CD8-positive, alpha-beta T cell (primary cell): ENCODE measurements at regions of chr11 and their contacts with region 1.

Region 1: DNA sequence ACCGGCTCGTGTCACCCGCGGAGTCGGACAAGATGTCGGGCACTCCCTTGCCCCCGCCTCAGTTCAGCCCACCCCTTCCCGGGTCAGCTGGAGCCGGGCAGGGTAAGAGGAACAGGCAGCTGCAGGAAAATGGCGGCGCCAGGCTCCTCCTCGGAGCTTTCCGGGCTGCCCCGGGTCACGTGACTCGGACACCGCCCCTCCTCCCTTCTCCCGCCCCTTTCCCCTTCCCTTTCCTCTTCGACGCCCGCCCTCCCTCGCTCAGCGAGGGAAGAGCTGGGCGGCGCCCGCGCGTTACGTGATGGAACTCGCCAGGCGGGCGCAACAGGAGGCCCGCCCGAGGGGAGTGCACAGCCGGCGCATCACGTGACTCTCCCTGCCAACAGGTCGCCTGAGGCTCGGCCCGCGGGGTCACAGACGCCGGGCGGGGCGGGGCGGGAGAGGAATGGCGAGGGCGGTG is at the start of gene PICALM:
- DNase-seq: peak; percentile 91 to 99 (median 96)
- ATAC-seq: peak; percentile 91
- H3K4me3 ChIP-seq: peak within 1 kb of the TSS; percentile 94
- H3K4me3 Mint-ChIP-seq: peak within 1 kb of the TSS; percentile 100
- H3K27ac ChIP-seq: peak within 1 kb of the TSS; percentile 67 to 93
- H3K27ac Mint-ChIP-seq: peak within 1 kb of the TSS; percentile 97
- H3K4me1 ChIP-seq: peaks cover 24% of the 10 kb centered on the region
- H3K4me1 Mint-ChIP-seq: peaks cover 34% of the 10 kb centered on the region
- H3K27me3 ChIP-seq: no peaks in the 10 kb centered on the region
- H3K27me3 Mint-ChIP-seq: no peaks in the 10 kb centered on the region
- CTCF ChIP-seq: no peak
- total RNA-seq, gene PICALM: 79.8 to 80.0 TPM

Region 2: DNA sequence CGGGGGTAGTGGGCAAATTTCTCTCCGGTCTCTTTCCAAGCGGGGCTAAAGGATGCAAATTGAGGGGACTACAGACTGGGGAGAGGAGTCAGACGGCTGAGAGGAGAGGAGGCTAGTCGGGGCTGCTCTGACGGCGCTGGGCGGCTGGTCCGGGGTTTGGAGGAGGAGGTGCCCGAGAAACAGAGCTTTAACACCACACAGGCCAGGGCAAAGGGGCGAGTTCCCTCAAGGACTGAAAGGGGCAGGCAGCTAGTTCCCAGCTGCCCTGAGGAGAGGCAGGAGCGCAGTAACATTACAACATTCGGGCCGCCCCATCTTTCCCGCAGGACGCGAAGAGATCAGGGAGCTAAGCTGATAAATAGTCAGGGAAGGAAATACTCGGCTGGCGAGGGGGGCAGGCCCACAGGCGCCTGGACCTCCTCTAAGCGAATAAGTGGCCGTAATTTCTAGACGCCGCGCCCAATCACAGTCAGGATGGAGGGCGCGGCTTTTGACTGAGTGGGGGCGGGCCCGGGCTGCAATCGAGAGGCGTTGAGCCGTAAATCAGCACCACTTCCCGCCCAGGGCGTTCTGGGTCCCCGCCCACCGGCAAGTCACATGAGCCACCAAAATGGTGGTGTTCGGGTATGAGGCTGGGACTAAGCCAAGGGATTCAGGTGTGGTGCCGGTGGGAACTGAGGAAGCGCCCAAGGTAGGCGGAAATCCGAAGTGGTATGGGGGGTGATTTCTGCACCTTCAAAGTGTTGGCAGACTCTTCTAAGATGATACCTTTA is 440.8 kb before region 1 on chr11 and contains the start of gene TMEM126B:
- CTCF ChIA-PET with region 1: interaction called, 3 read pairs
- POLR2A ChIA-PET with region 1: interaction called, 6 read pairs
- intact Hi-C with region 1: loop called (anchors 1 to 2 kb)
- DNase-seq: peak; percentile 89 to 97 (median 96)
- ATAC-seq: peak; percentile 97
- H3K4me3 ChIP-seq: peak within 1 kb of the TSS; percentile 80 to 91
- H3K4me3 Mint-ChIP-seq: peak within 1 kb of the TSS; percentile 91
- H3K27ac ChIP-seq: peak within 1 kb of the TSS; percentile 76 to 83
- H3K27ac Mint-ChIP-seq: peak within 1 kb of the TSS; percentile 96
- H3K4me1 ChIP-seq: peaks cover 14% of the 10 kb centered on the region
- H3K4me1 Mint-ChIP-seq: peaks cover 51% of the 10 kb centered on the region
- H3K27me3 ChIP-seq: peaks cover 0 to 1% of the 10 kb centered on the region in 2 experiments
- H3K27me3 Mint-ChIP-seq: no peaks in the 10 kb centered on the region
- CTCF ChIP-seq: no peak
- total RNA-seq, gene TMEM126B: 16.2 to 19.9 TPM

Region 3: GRCh38 chr11:85664615-85665481 is 404.1 kb before region 1 on chr11 and contains the start of gene CREBZF:
- CTCF ChIA-PET with region 1: no interaction called
- POLR2A ChIA-PET with region 1: interaction called, 7 read pairs
- intact Hi-C with region 1: loop called (anchors 1 to 5 kb)
- DNase-seq: peak; percentile 84 to 96 (median 94)
- ATAC-seq: peak; percentile 61
- H3K4me3 ChIP-seq: peak within 1 kb of the TSS; percentile 78 to 94
- H3K4me3 Mint-ChIP-seq: peak within 1 kb of the TSS; percentile 100
- H3K27ac ChIP-seq: peak within 1 kb of the TSS; percentile 96 to 97
- H3K27ac Mint-ChIP-seq: peak within 1 kb of the TSS; percentile 100
- H3K4me1 ChIP-seq: peaks cover 38% of the 10 kb centered on the region
- H3K4me1 Mint-ChIP-seq: peaks cover 43% of the 10 kb centered on the region
- H3K27me3 ChIP-seq: no peaks in the 10 kb centered on the region
- H3K27me3 Mint-ChIP-seq: no peaks in the 10 kb centered on the region
- CTCF ChIP-seq: no peak
- total RNA-seq, gene CREBZF: 32.2 to 33.3 TPM

Region 4: GRCh38 chr11:85810871-85811611 is 257.9 kb before region 1 on chr11 and contains the start of gene SYTL2:
- CTCF ChIA-PET with region 1: no interaction called
- POLR2A ChIA-PET with region 1: interaction called, 3 read pairs
- intact Hi-C with region 1: loop called in 1 of 2 experiments (anchors 5 kb)
- DNase-seq: peak; percentile 53 to 89 (median 74)
- ATAC-seq: peak; percentile 78
- H3K4me3 ChIP-seq: peak within 1 kb of the TSS; percentile 68 to 85
- H3K4me3 Mint-ChIP-seq: peak within 1 kb of the TSS; percentile 93
- H3K27ac ChIP-seq: peak within 1 kb of the TSS; percentile 50 to 56
- H3K27ac Mint-ChIP-seq: peak within 1 kb of the TSS; percentile 93
- H3K4me1 ChIP-seq: peaks cover 19% of the 10 kb centered on the region
- H3K4me1 Mint-ChIP-seq: peaks cover 48% of the 10 kb centered on the region
- H3K27me3 ChIP-seq: no peaks in the 10 kb centered on the region
- H3K27me3 Mint-ChIP-seq: peaks cover 2% of the 10 kb centered on the region
- CTCF ChIP-seq: no peak
- total RNA-seq, gene SYTL2: 37.2 to 43.6 TPM

Region 5: DNA sequence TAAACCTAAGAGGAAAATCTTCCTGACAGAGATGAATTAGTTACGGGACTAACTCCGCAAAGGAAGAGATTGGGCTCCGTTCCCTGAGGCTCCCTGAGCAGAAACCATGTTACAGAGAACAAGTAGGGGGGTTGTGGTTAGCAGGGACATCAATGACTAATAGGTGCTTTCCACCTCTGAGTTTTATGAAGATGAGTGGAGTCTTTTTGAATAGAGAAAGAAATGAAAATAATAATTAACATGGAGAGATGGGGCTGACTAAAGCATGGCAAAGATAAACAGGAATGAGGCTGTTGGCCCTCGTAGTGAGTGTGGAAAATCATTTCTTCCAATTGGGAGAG is 47.4 kb after region 1 on chr11:
- CTCF ChIA-PET with region 1: no interaction called
- POLR2A ChIA-PET with region 1: interaction called, 5 read pairs
- intact Hi-C with region 1: loop called in 1 of 2 experiments (anchors 2 kb)
- DNase-seq: peak in 4 of 9 experiments; percentile 18 to 73 (median 42)
- ATAC-seq: peak; percentile 70
- H3K4me3 ChIP-seq: no peak overlapping the region
- H3K4me3 Mint-ChIP-seq: no peak overlapping the region
- H3K27ac ChIP-seq: no peak overlapping the region
- H3K27ac Mint-ChIP-seq: no peak overlapping the region
- H3K4me1 ChIP-seq: no peaks in the 10 kb centered on the region
- H3K4me1 Mint-ChIP-seq: peaks cover 12% of the 10 kb centered on the region
- H3K27me3 ChIP-seq: no peaks in the 10 kb centered on the region
- H3K27me3 Mint-ChIP-seq: no peaks in the 10 kb centered on the region
- CTCF ChIP-seq: no peak

Region 6: DNA sequence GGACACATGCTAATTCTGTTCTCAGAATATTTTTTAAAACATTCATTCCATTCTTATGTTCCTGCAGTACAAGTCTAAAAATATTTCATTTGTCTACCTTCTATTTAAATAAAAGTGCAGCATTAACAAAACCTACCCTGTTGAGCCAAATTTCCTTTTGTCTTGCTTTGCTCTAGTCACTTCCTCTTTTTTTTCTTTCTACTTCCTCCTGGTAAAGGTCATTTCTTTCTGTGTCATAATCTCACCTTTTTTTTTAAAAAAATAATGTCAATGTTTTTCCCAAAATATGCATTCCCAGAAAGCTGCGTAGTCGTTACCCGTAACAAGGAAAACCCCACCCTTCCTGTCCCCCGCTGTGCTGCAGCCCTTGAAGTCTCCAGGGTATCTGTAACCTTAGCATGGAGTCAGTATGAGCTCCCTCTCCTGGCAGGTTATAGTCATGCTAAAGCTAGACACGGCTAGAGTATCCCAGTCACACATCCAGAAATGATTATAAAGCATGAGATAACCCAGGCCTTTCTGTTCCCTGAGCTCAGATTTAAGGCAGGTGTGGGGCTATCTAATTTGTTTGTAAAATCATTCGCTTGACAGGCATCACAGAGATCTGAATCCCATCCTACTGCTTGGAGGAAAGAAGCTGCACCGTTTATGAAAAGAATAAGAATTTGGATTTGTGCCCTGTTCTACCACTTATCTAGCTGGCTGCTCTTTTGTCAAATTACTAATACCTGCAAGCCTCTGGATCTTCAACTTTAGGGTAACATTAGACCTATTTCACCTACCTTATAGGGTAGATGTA is 124.5 kb after region 1 on chr11:
- CTCF ChIA-PET with region 1: interaction called, 23 read pairs
- POLR2A ChIA-PET with region 1: interaction called, 9 read pairs
- intact Hi-C with region 1: loop called in 1 of 2 experiments (anchors 1 kb)
- DNase-seq: peak; percentile 26 to 86 (median 59)
- ATAC-seq: peak; percentile 100
- H3K4me3 ChIP-seq: peak overlapping the region; percentile 37 to 54
- H3K4me3 Mint-ChIP-seq: peak overlapping the region; percentile 83
- H3K27ac ChIP-seq: peak overlapping the region in 1 of 2 experiments; percentile 60
- H3K27ac Mint-ChIP-seq: peak overlapping the region; percentile 73
- H3K4me1 ChIP-seq: peaks cover 6% of the 10 kb centered on the region
- H3K4me1 Mint-ChIP-seq: peaks cover 15% of the 10 kb centered on the region
- H3K27me3 ChIP-seq: no peaks in the 10 kb centered on the region
- H3K27me3 Mint-ChIP-seq: no peaks in the 10 kb centered on the region
- CTCF ChIP-seq: peak; percentile 80

Region 7: DNA sequence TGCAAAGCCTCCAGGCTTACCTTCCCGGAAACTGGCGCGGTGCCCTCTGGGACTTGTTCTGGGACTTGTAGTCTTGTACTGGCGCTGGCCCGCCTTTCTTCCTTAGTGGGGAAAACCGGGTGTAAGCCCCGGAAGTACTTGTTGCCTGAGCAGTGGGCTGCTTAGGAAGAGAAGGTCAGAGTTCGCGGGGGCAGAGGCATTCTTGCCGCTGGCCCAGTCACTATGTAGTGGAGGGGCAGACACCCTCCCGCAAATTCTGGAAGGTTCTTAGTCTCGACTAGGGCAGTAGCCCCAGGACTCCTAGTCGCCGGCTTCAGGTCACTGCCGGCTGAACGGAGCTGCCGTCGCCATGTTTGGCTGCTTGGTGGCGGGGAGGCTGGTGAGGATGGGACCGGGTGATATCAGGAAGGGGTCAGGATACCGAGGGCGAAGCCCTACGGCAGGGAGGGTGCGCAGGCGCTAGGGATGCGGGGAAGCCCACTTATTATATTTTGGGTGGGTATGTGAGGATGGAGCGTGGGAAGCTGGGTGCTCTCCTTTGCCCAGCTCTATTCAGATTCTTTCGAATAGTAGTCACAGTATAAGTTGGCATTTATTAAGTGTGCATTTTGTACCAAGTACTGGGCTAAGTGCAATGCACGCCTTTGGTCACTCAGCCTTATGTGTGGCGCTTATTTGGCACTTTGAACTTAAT is 233.3 kb after region 1 on chr11 and contains the start of gene HIKESHI:
- CTCF ChIA-PET with region 1: no interaction called
- POLR2A ChIA-PET with region 1: no interaction called
- intact Hi-C with region 1: loop called (anchors 1 kb)
- DNase-seq: peak; percentile 74 to 96 (median 93)
- ATAC-seq: peak; percentile 98
- H3K4me3 ChIP-seq: peak within 1 kb of the TSS; percentile 73 to 86
- H3K4me3 Mint-ChIP-seq: peak within 1 kb of the TSS; percentile 99
- H3K27ac ChIP-seq: peak within 1 kb of the TSS; percentile 74 to 76
- H3K27ac Mint-ChIP-seq: peak within 1 kb of the TSS; percentile 99
- H3K4me1 ChIP-seq: peaks cover 22% of the 10 kb centered on the region
- H3K4me1 Mint-ChIP-seq: peaks cover 29% of the 10 kb centered on the region
- H3K27me3 ChIP-seq: no peaks in the 10 kb centered on the region
- H3K27me3 Mint-ChIP-seq: no peaks in the 10 kb centered on the region
- CTCF ChIP-seq: no peak
- total RNA-seq, gene HIKESHI: 4.9 to 6.9 TPM